Activated naive CD4-positive, alpha-beta T cell treated with anti-CD3 and anti-CD28 coated beads for 36 hours (primary cell): ENCODE measurements at regions of chr4 and their contacts with region 1.

Region 1: GRCh38 chr4:42282081-42282901 is 115.0 kb upstream of the SHISA3 start:
- DNase-seq: peak; percentile 49
- H3K4me3 Mint-ChIP-seq: no peak overlapping the region
- H3K27ac Mint-ChIP-seq: no peak overlapping the region
- H3K4me1 Mint-ChIP-seq: no peaks in the 10 kb centered on the region
- H3K27me3 Mint-ChIP-seq: peaks cover 24% of the 10 kb centered on the region

Region 2: GRCh38 chr4:41692717-41693345 is 589.5 kb before region 1 on chr4:
- CTCF ChIA-PET with region 1: no interaction called
- intact Hi-C with region 1: loop called (anchors 1 kb)
- DNase-seq: peak; percentile 52
- H3K4me3 Mint-ChIP-seq: no peak overlapping the region
- H3K27ac Mint-ChIP-seq: no peak overlapping the region
- H3K4me1 Mint-ChIP-seq: no peaks in the 10 kb centered on the region
- H3K27me3 Mint-ChIP-seq: peaks cover 5% of the 10 kb centered on the region

Region 3: GRCh38 chr4:41957634-41958033 is 324.7 kb before region 1 on chr4:
- CTCF ChIA-PET with region 1: no interaction called
- intact Hi-C with region 1: loop called (anchors 1 kb)
- DNase-seq: no peak
- H3K4me3 Mint-ChIP-seq: no peak overlapping the region
- H3K27ac Mint-ChIP-seq: no peak overlapping the region
- H3K4me1 Mint-ChIP-seq: no peaks in the 10 kb centered on the region
- H3K27me3 Mint-ChIP-seq: no peaks in the 10 kb centered on the region

Region 4: GRCh38 chr4:42519803-42520417 is 237.6 kb after region 1 on chr4:
- CTCF ChIA-PET with region 1: interaction called, 45 read pairs
- intact Hi-C with region 1: loop called (anchors 1 kb)
- DNase-seq: peak; percentile 71
- H3K4me3 Mint-ChIP-seq: no peak overlapping the region
- H3K27ac Mint-ChIP-seq: no peak overlapping the region
- H3K4me1 Mint-ChIP-seq: no peaks in the 10 kb centered on the region
- H3K27me3 Mint-ChIP-seq: no peaks in the 10 kb centered on the region

Region 5: GRCh38 chr4:42750091-42750490 is 467.8 kb after region 1 on chr4:
- CTCF ChIA-PET with region 1: no interaction called
- intact Hi-C with region 1: loop called (anchors 1 kb)
- DNase-seq: peak; percentile 58
- H3K4me3 Mint-ChIP-seq: no peak overlapping the region
- H3K27ac Mint-ChIP-seq: no peak overlapping the region
- H3K4me1 Mint-ChIP-seq: peaks cover 3% of the 10 kb centered on the region
- H3K27me3 Mint-ChIP-seq: no peaks in the 10 kb centered on the region

Region 6: GRCh38 chr4:42865572-42866189 is 583.4 kb after region 1 on chr4:
- CTCF ChIA-PET with region 1: interaction called, 4 read pairs
- intact Hi-C with region 1: loop called (anchors 1 kb)
- DNase-seq: peak; percentile 71
- H3K4me3 Mint-ChIP-seq: no peak overlapping the region
- H3K27ac Mint-ChIP-seq: no peak overlapping the region
- H3K4me1 Mint-ChIP-seq: no peaks in the 10 kb centered on the region
- H3K27me3 Mint-ChIP-seq: peaks cover 18% of the 10 kb centered on the region